Heart right ventricle (tissue), 16 donors: ENCODE measurements at regions of chr2 and their contacts with region 1.

Region 1: DNA sequence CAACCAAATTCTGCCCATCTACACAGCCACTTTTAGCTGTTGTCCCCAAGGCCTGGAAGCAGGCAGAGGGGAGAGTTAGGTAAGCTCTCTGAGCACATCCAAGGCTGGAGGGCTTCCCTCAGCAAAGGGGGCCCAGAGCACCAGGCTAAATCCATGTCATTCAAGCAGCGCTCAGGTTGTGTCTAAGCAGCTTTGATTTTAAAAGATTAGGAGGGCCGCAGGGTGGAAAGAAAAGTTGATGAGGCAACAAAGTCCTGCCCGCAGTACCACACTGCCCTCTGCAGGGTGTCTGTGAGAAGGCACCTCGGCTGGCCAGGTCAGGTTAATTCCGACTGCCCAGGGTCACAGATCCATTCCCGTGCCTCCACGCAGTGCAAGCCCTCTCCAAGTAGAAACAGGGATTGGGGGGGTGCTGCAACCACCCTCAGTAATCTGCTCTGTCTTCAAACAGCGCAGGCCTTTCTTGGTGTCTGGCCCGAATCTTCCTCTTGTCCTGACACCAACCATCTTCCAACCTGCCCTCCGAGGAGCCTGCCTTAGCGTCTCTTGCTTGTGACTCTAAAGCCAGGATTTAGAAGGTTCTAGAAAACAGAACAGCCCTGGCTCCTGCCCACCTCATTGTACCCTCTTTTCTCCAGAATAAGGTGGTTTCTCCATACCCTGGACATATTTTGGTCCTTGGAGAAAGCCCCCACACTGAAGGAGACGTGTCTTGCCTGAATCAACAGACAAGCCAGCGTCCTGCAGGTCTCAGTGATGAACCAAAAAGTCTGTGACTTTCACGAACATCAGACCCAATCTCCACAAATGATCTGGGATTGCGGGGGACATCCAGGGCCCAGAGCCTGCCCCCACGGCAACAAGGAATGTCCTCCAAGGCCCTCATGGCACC is 289.2 kb downstream of the TNS1 start:
- DNase-seq: peak; percentile 80 to 82
- ATAC-seq: peak; percentile 76 to 88 (median 84)
- H3K4me3 ChIP-seq: no peak overlapping the region
- H3K27ac ChIP-seq: peak overlapping the region in 9 of 10 donors; percentile 12 to 82 (median 56)
- H3K4me1 ChIP-seq: peaks cover 0 to 26% (median 20%) of the 10 kb centered on the region in 9 donors
- H3K27me3 ChIP-seq: no peaks in the 10 kb centered on the region
- CTCF ChIP-seq: peak; percentile 86 to 99 (median 98)

Region 2: GRCh38 chr2:216687646-216688045 is 1026.0 kb before region 1 on chr2:
- intact Hi-C with region 1: loop called in 8 of 10 experiments (anchors 2 to 10 kb)
- DNase-seq: no peak
- ATAC-seq: no peak
- H3K4me3 ChIP-seq: no peak overlapping the region
- H3K27ac ChIP-seq: peak overlapping the region in 1 of 10 donors; percentile 2
- H3K4me1 ChIP-seq: peaks cover 11 to 90% (median 62%) of the 10 kb centered on the region in 9 donors
- H3K27me3 ChIP-seq: peaks cover 0 to 49% (median 0%) of the 10 kb centered on the region in 7 donors
- CTCF ChIP-seq: peak in 7 of 9 donors; percentile 8 to 41 (median 29)

Region 3: DNA sequence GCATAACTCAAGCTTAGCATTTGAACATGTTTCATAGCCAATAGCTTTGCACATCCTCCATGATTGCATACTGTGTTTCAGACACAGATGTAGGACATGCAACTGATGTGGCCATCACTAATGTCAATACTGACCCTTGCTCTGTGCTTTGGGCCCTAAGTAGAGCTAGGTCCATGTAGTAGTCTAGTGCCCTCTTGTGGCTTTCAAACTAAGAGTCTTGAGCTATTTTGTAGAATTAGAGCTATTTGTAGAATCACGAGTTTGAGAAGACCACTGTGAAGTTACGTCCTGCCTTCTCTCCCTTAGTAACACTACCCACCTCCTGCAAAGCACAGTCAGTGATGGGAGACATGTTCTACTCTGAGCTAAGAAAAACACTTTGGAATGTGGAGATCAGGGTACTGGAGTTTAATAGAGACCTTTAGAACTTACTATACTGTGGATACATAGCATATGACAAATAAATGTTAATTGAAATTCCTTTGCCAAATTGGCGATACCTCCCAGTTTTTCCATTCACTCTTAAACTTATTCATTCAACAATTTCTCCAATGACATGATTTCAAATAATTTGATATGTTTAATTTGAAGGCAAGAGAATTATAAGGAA is 547.3 kb before region 1 on chr2:
- intact Hi-C with region 1: loop called in 2 of 10 experiments (anchors 10 kb)
- DNase-seq: peak in 1 of 2 donors; percentile 41
- ATAC-seq: peak; percentile 43 to 83 (median 69)
- H3K4me3 ChIP-seq: no peak overlapping the region
- H3K27ac ChIP-seq: no peak overlapping the region
- H3K4me1 ChIP-seq: peaks cover 0 to 23% (median 5%) of the 10 kb centered on the region in 9 donors
- H3K27me3 ChIP-seq: peaks cover 0 to 74% (median 0%) of the 10 kb centered on the region in 7 donors
- CTCF ChIP-seq: peak; percentile 42 to 78 (median 64)

Region 4: GRCh38 chr2:217521820-217522219 is 191.8 kb before region 1 on chr2:
- intact Hi-C with region 1: loop called in 4 of 10 experiments (anchors 5 to 10 kb)
- DNase-seq: no peak
- ATAC-seq: peak in 3 of 8 donors; percentile 14 to 54 (median 27)
- H3K4me3 ChIP-seq: no peak overlapping the region
- H3K27ac ChIP-seq: no peak overlapping the region
- H3K4me1 ChIP-seq: peaks cover 0 to 15% (median 8%) of the 10 kb centered on the region in 9 donors
- H3K27me3 ChIP-seq: no peaks in the 10 kb centered on the region
- CTCF ChIP-seq: no peak